ENCODE measurements at regions of chr11 and their contacts with region 1.

Region 1: GRCh38 chr11:107957109-107957588 is 28.9 kb downstream of the RAB39A start:
- DNase-seq: peak in 1 of 3 donors; percentile 9
- ATAC-seq: peak; percentile 53
- H3K4me3 ChIP-seq: no peak overlapping the region
- H3K4me1 ChIP-seq: no peaks in the 10 kb centered on the region
- CTCF ChIP-seq: no peak

Region 2: GRCh38 chr11:107397357-107397756 is 559.8 kb before region 1 on chr11:
- intact Hi-C with region 1: loop called in 1 of 2 experiments (anchors 10 kb)
- DNase-seq: no peak
- ATAC-seq: no peak
- H3K4me3 ChIP-seq: no peak overlapping the region
- H3K4me1 ChIP-seq: no peaks in the 10 kb centered on the region
- CTCF ChIP-seq: no peak

Region 3: DNA sequence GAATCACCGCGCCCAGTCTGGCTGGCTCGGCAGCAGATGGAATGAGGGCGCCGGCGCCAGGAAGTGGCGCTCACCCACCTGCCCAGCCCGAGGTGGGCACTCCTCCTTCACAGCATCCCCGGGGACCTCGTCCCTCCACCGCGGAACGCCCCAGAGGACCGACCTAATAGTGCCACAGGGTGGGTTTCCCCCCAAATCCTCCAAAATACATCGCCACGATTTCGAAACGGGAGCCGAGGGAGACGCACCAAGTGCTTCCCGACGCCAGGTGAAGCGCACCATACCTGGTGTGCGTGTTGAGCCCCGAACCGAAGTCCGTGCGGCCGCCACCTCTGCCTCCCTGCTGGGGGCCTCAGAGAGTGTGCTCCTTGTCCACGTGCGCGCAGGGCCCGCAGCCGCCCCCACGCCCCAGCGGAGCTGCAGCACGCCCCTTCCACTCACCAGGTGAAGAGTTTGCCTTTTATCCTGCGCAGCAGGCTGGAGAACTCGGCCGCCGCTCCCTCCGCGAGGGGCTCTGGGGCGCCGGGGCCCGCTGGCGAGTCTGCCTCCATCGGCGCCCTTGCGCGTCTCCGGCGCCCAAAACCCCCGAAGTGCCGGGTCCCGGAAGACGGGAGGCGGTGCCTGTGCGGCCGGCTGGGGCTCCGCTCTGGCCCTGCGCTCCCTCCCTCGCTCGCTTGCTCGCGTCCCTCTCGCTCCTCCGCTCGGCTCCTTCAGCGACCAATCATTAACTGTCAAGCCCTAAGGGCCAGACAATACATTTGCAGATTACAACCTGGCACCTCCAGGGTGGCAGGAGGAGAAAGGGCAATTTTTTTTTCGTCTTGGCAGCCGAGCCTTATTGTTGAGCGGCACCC is 98.7 kb before region 1 on chr11 and contains the start of gene SLC35F2:
- intact Hi-C with region 1: no loop called
- DNase-seq: peak; percentile 78 to 86 (median 85)
- ATAC-seq: peak; percentile 90
- H3K4me3 ChIP-seq: peak within 1 kb of the TSS; percentile 61
- H3K4me1 ChIP-seq: no peaks in the 10 kb centered on the region
- CTCF ChIP-seq: no peak
- total RNA-seq, gene SLC35F2: 13.2 to 32.7 (median 31.6) TPM